Right cardiac atrium (tissue), 5 donors: ENCODE measurements at regions of chr10 and their contacts with region 1.

Region 1: GRCh38 chr10:112429147-112429546 is 17.6 kb downstream of the ZDHHC6 start:
- DNase-seq: no peak
- ATAC-seq: no peak
- H3K4me3 ChIP-seq: no peak overlapping the region
- H3K27ac ChIP-seq: no peak overlapping the region
- H3K4me1 ChIP-seq: no peaks in the 10 kb centered on the region
- H3K27me3 ChIP-seq: no peaks in the 10 kb centered on the region

Region 2: DNA sequence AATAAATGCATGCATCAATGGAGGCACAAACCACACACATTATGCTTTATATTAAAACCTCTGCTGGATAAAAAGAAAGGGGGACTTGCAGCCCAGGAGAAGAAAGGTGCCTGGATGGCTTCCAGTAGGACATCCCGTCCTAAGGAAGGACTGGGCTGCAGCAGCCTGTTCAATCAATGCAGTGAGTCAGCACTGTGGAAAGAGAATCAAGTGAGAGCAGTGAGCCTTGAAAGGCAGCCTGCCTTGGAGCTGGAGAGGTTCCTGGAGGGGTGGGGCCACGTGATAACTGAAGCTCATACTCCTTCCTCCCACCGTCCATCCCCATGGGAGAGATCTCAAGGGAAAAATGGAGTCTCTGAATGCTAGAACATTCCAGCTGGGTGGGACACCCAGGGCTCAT is 851.1 kb before region 1 on chr10:
- intact Hi-C with region 1: no loop called
- DNase-seq: peak in 1 of 3 donors; percentile 36
- ATAC-seq: no peak
- H3K4me3 ChIP-seq: no peak overlapping the region
- H3K27ac ChIP-seq: no peak overlapping the region
- H3K4me1 ChIP-seq: no peaks in the 10 kb centered on the region
- H3K27me3 ChIP-seq: no peaks in the 10 kb centered on the region

Region 3: GRCh38 chr10:112332509-112333228 is 96.5 kb before region 1 on chr10:
- intact Hi-C with region 1: loop called in 1 of 4 experiments (anchors 10 kb)
- DNase-seq: no peak
- ATAC-seq: no peak
- H3K4me3 ChIP-seq: no peak overlapping the region
- H3K27ac ChIP-seq: no peak overlapping the region
- H3K4me1 ChIP-seq: no peaks in the 10 kb centered on the region
- H3K27me3 ChIP-seq: no peaks in the 10 kb centered on the region